SK-N-SH (cell line): ENCODE measurements at regions of chr20 and their contacts with region 1.

Region 1: DNA sequence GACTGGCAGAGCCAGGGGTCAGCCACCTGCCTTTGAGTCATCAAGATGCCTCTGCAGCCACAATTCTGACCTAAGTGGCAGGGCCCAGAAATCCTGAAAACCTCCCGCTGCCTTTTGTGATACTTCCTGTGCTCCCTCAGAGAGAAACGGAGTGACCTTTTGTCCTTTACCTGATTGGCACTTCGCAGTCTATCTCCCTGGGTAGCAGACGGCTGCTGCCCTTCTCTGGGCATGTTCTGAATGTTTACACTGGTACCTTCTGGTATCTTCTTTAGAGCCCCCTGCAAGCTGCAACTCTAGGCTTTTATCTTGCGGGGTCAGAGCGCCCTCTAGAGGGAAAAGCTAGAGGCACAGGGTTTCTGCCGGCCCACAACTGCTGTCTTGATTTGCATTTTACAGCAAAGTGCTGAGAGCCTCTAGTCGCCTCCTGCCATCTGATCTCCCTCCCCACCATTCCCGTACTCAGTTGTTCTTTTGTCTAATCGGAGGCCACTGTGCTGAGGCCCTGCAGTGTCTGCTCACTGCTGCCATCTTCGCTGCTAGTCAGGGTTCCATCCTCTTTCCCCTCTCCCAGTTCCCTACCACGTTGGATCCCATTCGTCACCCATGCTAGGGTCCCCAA is 26.9 kb downstream of the SPATA2 start:
- DNase-seq: peak; percentile 85
- H3K4me3 ChIP-seq: peak overlapping the region in 1 of 2 experiments; percentile 55; a peak in 1 of 4 replicates
- H3K27ac ChIP-seq: no peak overlapping the region; a peak in 1 of 4 replicates
- H3K4me1 ChIP-seq: peaks cover 0 to 8% of the 10 kb centered on the region in 2 experiments; a peak in 1 of 4 replicates
- H3K27me3 ChIP-seq: no peaks in the 10 kb centered on the region
- CTCF ChIP-seq: peak; percentile 95
- EP300 ChIP-seq: peak in 1 of 2 experiments; percentile 37; a peak in 1 of 4 replicates
- RAD21 ChIP-seq: peak; percentile 87

Region 2: GRCh38 chr20:49853640-49854039 is 34.8 kb before region 1 on chr20:
- CTCF ChIA-PET with region 1: interaction called, 19 read pairs
- POLR2A ChIA-PET with region 1: no interaction called
- DNase-seq: peak; percentile 45
- H3K4me3 ChIP-seq: no peak overlapping the region
- H3K27ac ChIP-seq: peak overlapping the region in 1 of 2 experiments; percentile 84; a peak in 2 of 4 replicates
- H3K4me1 ChIP-seq: peaks cover 4 to 25% of the 10 kb centered on the region in 2 experiments; a peak in 3 of 4 replicates
- H3K27me3 ChIP-seq: no peaks in the 10 kb centered on the region
- CTCF ChIP-seq: no peak
- EP300 ChIP-seq: no peak
- RAD21 ChIP-seq: no peak

Region 3: GRCh38 chr20:49877386-49877921 is 11.0 kb before region 1 on chr20:
- CTCF ChIA-PET with region 1: interaction called, 15 read pairs
- POLR2A ChIA-PET with region 1: no interaction called
- DNase-seq: no peak
- H3K4me3 ChIP-seq: no peak overlapping the region
- H3K27ac ChIP-seq: no peak overlapping the region
- H3K4me1 ChIP-seq: no peaks in the 10 kb centered on the region; a peak in 1 of 4 replicates
- H3K27me3 ChIP-seq: no peaks in the 10 kb centered on the region
- CTCF ChIP-seq: no peak
- EP300 ChIP-seq: no peak
- RAD21 ChIP-seq: no peak

Region 4: DNA sequence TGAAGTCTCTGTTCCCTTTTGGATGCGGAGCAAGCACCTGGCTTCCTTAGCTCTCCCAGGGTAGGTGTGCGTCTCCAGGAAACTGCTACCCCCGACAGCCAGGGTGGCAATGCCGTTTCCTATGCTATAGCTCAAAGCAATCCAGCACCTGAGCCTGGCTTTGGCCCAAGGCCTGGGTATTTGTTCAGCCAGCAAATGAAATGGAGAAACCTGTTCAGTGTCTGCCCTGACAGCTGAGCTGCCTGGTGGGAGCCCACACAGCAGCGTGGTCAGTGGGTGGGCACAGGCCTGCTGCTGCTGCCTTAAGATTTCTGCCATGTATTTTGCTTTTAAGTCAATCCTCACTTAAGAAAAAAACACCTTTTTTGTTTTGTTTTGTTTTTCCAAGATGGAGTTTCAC is 13.1 kb after region 1 on chr20:
- CTCF ChIA-PET with region 1: interaction called, 32 read pairs
- POLR2A ChIA-PET with region 1: no interaction called
- DNase-seq: no peak
- H3K4me3 ChIP-seq: no peak overlapping the region
- H3K27ac ChIP-seq: no peak overlapping the region
- H3K4me1 ChIP-seq: peaks cover 0 to 10% of the 10 kb centered on the region in 2 experiments; a peak in 1 of 4 replicates
- H3K27me3 ChIP-seq: no peaks in the 10 kb centered on the region
- CTCF ChIP-seq: no peak
- EP300 ChIP-seq: 0 out of 4 replicates have a peak, but pooled peaks of 1 of the 2 experiments have one; percentile 19
- RAD21 ChIP-seq: no peak